PC-3 (cell line): ENCODE measurements at regions of chr2 and their contacts with region 1.

Region 1: GRCh38 chr2:224039124-224039940 is at the start of gene SERPINE2:
- DNase-seq: peak; percentile 69
- ATAC-seq: peak; percentile 74
- H3K4me3 ChIP-seq: peak within 1 kb of the TSS; percentile 72
- H3K27ac ChIP-seq: no peak within 1 kb of the TSS
- H3K4me1 ChIP-seq: peaks cover 16% of the 10 kb centered on the region
- H3K27me3 ChIP-seq: no peaks in the 10 kb centered on the region
- CTCF ChIP-seq: peak; percentile 70
- total RNA-seq, gene SERPINE2: 17.1 and 18.8 TPM in 2 replicates

Region 2: GRCh38 chr2:223970343-223971128 is 68.8 kb before region 1 on chr2:
- CTCF ChIA-PET with region 1: no interaction called
- POLR2A ChIA-PET with region 1: no interaction called
- intact Hi-C with region 1: no loop called
- DNase-seq: peak; percentile 85
- ATAC-seq: peak; percentile 68
- H3K4me3 ChIP-seq: no peak overlapping the region
- H3K27ac ChIP-seq: no peak overlapping the region
- H3K4me1 ChIP-seq: peaks cover 15% of the 10 kb centered on the region
- H3K27me3 ChIP-seq: no peaks in the 10 kb centered on the region
- CTCF ChIP-seq: peak; percentile 94

Region 3: DNA sequence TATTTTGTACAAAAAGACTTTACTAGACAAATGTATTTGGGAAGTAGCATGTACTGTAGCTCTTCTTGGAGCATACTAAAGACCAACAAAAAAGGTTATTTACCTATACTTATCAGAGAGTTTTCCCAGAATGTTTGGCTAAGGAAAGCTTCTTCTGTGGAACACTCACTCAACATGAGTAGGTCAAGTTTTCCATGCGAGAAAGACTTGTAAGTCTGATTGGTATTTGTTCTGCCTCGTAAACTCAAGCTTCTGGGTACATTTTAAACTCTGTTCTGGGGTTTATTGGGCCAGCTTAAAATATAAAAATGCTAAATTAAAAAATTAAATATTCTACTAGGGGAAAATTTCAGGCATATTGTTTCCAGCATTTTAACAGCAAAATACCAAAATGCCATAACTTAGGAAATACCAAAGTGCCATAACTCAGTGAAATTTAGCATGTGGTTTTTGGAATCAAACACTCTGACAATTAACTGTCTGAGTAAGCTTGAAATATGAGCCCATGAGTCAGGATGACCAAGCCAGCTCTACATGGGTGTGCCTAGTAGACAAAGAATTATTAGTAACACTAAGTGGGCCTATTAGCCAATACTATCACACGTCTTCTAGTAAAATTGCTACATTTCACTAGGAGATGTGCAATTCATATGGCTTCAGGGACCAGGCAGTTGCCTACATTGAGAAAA is 47.0 kb after region 1 on chr2:
- CTCF ChIA-PET with region 1: no interaction called
- POLR2A ChIA-PET with region 1: no interaction called
- intact Hi-C with region 1: loop called (anchors 2 kb)
- DNase-seq: peak; percentile 96
- ATAC-seq: peak; percentile 88
- H3K4me3 ChIP-seq: peak overlapping the region; percentile 55
- H3K27ac ChIP-seq: peak overlapping the region; percentile 97
- H3K4me1 ChIP-seq: peaks cover 35% of the 10 kb centered on the region
- H3K27me3 ChIP-seq: no peaks in the 10 kb centered on the region
- CTCF ChIP-seq: no peak

Region 4: GRCh38 chr2:224268441-224268840 is 229.1 kb after region 1 on chr2:
- CTCF ChIA-PET with region 1: no interaction called
- POLR2A ChIA-PET with region 1: no interaction called
- intact Hi-C with region 1: loop called (anchors 1 kb)
- DNase-seq: peak; percentile 97
- ATAC-seq: peak; percentile 93
- H3K4me3 ChIP-seq: no peak overlapping the region
- H3K27ac ChIP-seq: peak overlapping the region; percentile 72
- H3K4me1 ChIP-seq: peaks cover 39% of the 10 kb centered on the region
- H3K27me3 ChIP-seq: no peaks in the 10 kb centered on the region
- CTCF ChIP-seq: no peak

Region 5: GRCh38 chr2:224284134-224284946 is 245.0 kb after region 1 on chr2:
- CTCF ChIA-PET with region 1: interaction called, 3 read pairs
- POLR2A ChIA-PET with region 1: no interaction called
- intact Hi-C with region 1: loop called (anchors 1 kb)
- DNase-seq: peak; percentile 73
- ATAC-seq: peak; percentile 77
- H3K4me3 ChIP-seq: no peak overlapping the region
- H3K27ac ChIP-seq: no peak overlapping the region
- H3K4me1 ChIP-seq: no peaks in the 10 kb centered on the region
- H3K27me3 ChIP-seq: no peaks in the 10 kb centered on the region
- CTCF ChIP-seq: peak; percentile 93; the same call in 1 of the 2 replicates